Activated CD4-positive, alpha-beta memory T cell treated with anti-CD3 and anti-CD28 coated beads, Interleukin-2, amount 10 ng/mL, durations not matched to agents 7 days and 5 days (primary cell): ENCODE measurements at regions of chr7 and their contacts with region 1.

Region 1: DNA sequence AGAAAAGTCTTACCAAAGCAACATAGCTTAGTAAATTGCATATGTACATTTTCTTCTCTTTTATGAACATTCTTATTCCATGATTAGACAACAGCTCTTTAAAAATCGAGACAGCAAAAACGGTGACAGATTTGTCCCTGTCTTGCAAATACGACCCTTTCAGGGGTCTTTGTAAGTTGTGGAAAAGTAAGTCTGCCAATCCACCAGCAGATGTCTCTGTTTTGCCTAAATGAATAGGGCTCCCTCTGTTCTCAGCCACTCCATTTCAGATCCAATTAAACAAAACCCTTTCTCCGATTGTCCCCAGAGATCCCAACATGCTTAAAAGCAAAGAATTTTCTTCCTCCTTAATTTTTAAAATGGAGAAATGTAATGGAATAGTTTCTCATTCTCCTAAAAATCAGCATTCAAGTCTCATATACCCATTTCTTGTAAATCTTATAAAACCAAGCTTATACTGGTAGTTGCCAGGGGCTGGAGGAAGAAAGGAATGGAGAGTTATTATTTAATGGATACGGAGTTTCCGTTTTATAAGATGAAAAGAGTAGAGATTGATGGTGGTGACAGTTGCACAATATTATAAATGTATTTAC is 61.0 kb upstream of the NFE2L3 start:
- DNase-seq: no peak
- H3K4me3 Mint-ChIP-seq: no peak overlapping the region
- H3K27ac Mint-ChIP-seq: no peak overlapping the region
- H3K4me1 Mint-ChIP-seq: peaks cover 15% of the 10 kb centered on the region
- H3K27me3 Mint-ChIP-seq: no peaks in the 10 kb centered on the region

Region 2: GRCh38 chr7:26078437-26079336 is 12.3 kb before region 1 on chr7:
- CTCF ChIA-PET with region 1: interaction called, 18 read pairs
- POLR2A ChIA-PET with region 1: interaction called, 3 read pairs
- DNase-seq: peak; percentile 73
- H3K4me3 Mint-ChIP-seq: no peak overlapping the region
- H3K27ac Mint-ChIP-seq: no peak overlapping the region
- H3K4me1 Mint-ChIP-seq: peaks cover 5% of the 10 kb centered on the region
- H3K27me3 Mint-ChIP-seq: peaks cover 71% of the 10 kb centered on the region

Region 3: DNA sequence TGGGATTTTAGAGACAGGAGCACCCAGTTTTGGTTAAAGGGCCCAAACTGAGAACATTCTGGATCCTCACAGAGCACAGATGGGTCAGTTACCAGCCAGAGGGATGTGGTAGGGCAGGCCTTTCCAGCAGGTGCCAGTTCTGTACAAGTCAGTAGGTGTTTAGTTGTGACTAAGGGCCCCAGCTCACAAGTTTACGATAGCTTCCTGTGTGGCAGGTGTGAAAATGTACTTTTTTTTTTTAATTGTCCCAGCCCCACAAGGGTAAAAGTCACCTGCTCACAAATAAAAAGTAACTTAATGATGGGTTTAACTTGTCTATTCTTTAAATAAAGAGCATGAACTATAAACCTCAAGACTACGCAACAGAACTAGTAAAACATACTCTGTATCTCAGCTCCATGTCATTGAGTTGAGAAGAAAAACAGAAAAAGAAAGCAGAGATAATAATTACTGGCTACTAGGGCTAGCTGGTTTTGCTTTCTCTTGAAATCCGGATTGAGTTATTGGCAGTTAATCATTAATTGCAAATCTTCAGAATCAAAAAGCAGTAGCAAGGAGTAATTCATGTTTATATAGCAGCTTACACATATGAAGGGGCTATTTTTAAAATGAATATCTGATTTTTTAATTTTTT is 76.4 kb after region 1 on chr7:
- CTCF ChIA-PET with region 1: interaction called, 10 read pairs
- POLR2A ChIA-PET with region 1: no interaction called
- DNase-seq: peak; percentile 44
- H3K4me3 Mint-ChIP-seq: no peak overlapping the region
- H3K27ac Mint-ChIP-seq: peak overlapping the region; percentile 75
- H3K4me1 Mint-ChIP-seq: peaks cover 36% of the 10 kb centered on the region
- H3K27me3 Mint-ChIP-seq: no peaks in the 10 kb centered on the region

Region 4: DNA sequence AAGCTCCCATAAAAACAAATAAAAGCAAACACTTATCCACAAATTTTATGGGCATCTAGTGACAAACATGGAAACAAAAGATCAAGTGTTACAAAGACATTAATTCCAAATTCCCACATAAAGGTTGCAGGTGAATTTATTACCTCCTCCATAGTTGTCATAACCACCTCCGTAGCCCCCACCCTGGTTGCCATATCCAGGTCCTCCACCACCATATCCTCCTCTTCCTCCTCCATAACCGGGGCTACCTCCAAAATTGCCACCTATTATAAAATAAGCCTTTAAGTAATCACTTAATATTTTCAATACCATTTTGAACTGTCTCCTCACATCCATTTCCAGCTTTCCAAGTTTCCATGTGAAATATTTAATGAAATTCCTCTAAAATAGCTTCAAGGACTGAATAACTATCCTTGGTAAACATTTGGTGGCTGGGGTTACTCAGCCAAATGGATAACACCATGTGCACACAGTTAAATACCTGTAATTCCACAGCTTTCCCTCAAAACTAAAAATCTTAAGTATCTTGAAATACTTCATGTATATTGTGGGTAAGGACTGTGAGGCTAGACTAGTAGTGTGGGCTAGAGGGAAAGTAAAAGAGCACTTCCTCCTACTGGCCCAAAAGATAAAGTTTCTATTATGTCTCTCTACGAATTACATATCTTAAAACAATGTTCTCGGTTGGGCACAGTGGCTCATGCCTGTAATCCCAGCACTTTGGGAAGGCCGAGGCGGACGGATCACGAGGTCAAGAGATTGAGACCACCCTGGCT is 102.6 kb after region 1 on chr7:
- CTCF ChIA-PET with region 1: interaction called, 29 read pairs
- POLR2A ChIA-PET with region 1: interaction called, 112 read pairs
- DNase-seq: no peak
- H3K4me3 Mint-ChIP-seq: peak overlapping the region; percentile 64
- H3K27ac Mint-ChIP-seq: peak overlapping the region; percentile 75
- H3K4me1 Mint-ChIP-seq: peaks cover 81% of the 10 kb centered on the region
- H3K27me3 Mint-ChIP-seq: no peaks in the 10 kb centered on the region

Region 5: GRCh38 chr7:26284995-26285632 is 194.1 kb after region 1 on chr7:
- CTCF ChIA-PET with region 1: interaction called, 14 read pairs
- POLR2A ChIA-PET with region 1: no interaction called
- DNase-seq: peak; percentile 26
- H3K4me3 Mint-ChIP-seq: no peak overlapping the region
- H3K27ac Mint-ChIP-seq: no peak overlapping the region
- H3K4me1 Mint-ChIP-seq: peaks cover 4% of the 10 kb centered on the region
- H3K27me3 Mint-ChIP-seq: peaks cover 7% of the 10 kb centered on the region